K562 (cell line): ENCODE measurements at regions of chrX and their contacts with region 1.

Region 1: DNA sequence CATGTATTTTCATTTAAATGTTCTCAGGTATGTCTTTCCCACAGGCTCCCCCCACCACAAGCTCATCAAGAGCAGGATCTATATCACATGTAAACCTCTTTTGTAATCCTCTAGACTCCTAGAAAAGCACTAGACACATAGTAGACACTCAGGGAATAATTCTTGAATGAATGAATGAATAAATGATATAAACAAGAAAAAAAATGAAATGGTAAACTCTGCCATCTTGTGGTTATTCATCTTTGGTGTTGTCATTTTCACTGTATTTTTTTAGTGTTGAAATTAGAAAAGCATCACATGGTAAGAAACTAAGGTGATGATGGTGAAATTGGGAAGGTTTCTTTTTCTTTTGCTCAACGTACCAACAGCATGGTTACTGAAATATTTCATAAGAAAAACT is 34.2 kb upstream of the C1GALT1C1 start:
- DNase-seq: peak in 1 of 4 experiments; percentile 16
- ATAC-seq: no peak
- H3K4me3 ChIP-seq: no peak overlapping the region
- H3K27ac ChIP-seq: no peak overlapping the region
- H3K4me1 ChIP-seq: no peaks in the 10 kb centered on the region
- H3K27me3 ChIP-seq: no peaks in the 10 kb centered on the region
- CTCF ChIP-seq: peak in 2 of 3 experiments; percentile 24 to 67; a peak in 3 of 6 replicates
- EP300 ChIP-seq: no peak
- POLR2A ChIP-seq: no peak
- RAD21 ChIP-seq: peak; percentile 50 to 78

Region 2: DNA sequence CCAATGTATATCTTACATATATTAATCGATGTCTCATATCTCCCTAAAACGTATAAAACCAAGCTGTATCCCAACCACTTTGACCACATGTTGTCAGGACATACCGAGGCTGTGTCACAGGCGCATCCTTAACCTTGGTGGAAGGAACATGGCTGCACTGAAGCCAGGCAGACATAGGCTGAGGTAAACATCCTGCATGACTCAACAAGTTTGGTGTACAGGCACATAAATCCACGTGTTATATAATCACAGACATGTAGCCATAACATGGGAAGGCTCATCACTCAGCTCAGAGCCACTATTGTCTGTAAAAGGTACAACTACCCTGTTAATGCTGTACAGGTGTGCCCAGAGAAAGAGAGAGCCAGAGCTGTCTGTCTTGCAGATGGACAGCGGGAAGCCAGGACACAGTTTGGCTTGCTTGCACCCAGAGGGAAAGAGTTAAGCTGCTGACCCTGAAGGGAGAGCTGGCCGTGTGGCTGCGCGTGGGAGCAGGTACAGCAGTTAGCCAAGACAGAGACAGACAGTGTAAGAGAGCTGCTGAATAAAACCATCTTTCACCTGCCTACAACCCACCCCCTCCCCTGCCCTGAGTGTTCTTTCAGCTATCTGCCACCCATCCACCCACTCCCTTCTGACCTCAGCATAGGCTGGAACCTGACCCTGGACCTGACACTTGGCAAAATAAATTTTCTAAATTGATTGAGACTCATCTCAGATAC is 435.7 kb before region 1 on chrX:
- CTCF ChIA-PET with region 1: no interaction called
- POLR2A ChIA-PET with region 1: no interaction called
- in situ Hi-C with region 1: no loop called
- intact Hi-C with region 1: no loop called
- DNase-seq: peak in 1 of 4 experiments; percentile 11
- ATAC-seq: peak; percentile 78
- H3K4me3 ChIP-seq: no peak overlapping the region
- H3K27ac ChIP-seq: 0 out of 3 replicates have a peak overlapping the region, but pooled peaks have one; percentile 25
- H3K4me1 ChIP-seq: peaks cover 8 to 10% of the 10 kb centered on the region in 2 experiments; a peak in 4 of 5 replicates
- H3K27me3 ChIP-seq: no peaks in the 10 kb centered on the region
- CTCF ChIP-seq: no peak
- EP300 ChIP-seq: no peak
- POLR2A ChIP-seq: no peak
- RAD21 ChIP-seq: no peak

Region 3: DNA sequence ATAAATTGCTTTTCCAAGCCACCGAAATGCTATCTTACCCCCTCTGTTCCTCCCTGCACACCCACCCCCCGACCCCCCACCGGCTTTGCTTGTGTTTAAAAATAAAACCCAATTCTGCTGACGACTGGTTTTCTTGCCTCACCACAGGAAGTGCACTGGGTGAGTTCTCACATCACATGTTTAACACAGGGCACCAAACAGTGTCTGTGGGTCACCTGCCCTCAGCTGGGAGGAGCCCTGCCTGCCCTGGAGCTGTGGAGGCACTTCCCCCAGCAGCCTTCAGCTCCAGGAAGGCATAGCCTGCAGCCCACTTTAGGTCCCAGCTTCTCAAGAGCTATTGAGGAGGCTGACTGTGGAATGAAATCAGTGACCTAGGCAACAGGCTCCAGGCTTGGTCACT is 361.6 kb before region 1 on chrX:
- CTCF ChIA-PET with region 1: no interaction called
- POLR2A ChIA-PET with region 1: no interaction called
- in situ Hi-C with region 1: no loop called
- intact Hi-C with region 1: no loop called
- DNase-seq: no peak
- ATAC-seq: no peak
- H3K4me3 ChIP-seq: no peak overlapping the region
- H3K27ac ChIP-seq: no peak overlapping the region
- H3K4me1 ChIP-seq: peaks cover 0 to 11% of the 10 kb centered on the region in 2 experiments; a peak in 3 of 5 replicates
- H3K27me3 ChIP-seq: no peaks in the 10 kb centered on the region
- CTCF ChIP-seq: no peak
- EP300 ChIP-seq: no peak
- POLR2A ChIP-seq: no peak
- RAD21 ChIP-seq: no peak

Region 4: DNA sequence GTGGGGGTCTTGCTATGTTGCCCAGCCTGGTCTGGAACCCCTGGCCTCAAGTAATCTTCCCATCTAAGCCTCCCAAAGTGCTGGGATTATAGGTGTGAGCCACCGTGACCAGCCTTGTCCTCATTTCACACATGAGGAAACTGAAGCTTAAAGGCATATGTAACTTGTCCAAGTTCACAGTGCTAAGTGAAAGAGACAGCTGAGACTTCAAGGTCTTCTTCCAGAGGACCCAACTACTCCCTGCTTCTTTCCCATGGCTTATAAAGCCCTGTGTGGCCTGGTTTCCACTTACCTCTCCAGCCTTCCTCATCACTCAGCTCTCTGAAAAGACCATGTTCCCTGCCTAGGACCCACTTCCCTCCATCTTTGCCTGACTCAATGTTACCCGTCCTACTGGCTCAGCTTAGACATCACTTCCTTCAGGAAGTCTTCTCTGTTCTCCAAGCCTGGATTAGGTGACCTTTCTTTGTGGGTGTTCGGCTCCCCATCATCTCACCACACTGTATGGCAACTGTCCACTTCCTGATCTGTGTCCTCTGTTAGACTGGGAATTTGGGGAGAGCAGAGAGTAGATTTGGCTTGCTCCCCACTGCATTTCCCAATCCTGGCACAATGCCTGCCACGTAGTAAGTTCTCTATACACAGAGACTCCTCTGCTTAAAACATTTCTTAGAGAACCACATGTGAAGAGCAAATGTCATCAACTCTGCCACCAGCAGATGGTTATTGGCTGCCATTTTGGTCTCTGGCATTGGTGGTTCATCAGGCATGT is 164.6 kb before region 1 on chrX:
- CTCF ChIA-PET with region 1: interaction called, 18 read pairs
- POLR2A ChIA-PET with region 1: no interaction called
- in situ Hi-C with region 1: no loop called
- intact Hi-C with region 1: loop called (anchors 1 kb)
- DNase-seq: no peak
- ATAC-seq: no peak
- H3K4me3 ChIP-seq: no peak overlapping the region
- H3K27ac ChIP-seq: no peak overlapping the region
- H3K4me1 ChIP-seq: no peaks in the 10 kb centered on the region; a peak in 1 of 5 replicates
- H3K27me3 ChIP-seq: no peaks in the 10 kb centered on the region
- CTCF ChIP-seq: no peak
- EP300 ChIP-seq: no peak
- POLR2A ChIP-seq: no peak
- RAD21 ChIP-seq: no peak

Region 5: GRCh38 chrX:120514236-120514635 is 149.8 kb before region 1 on chrX:
- CTCF ChIA-PET with region 1: interaction called, 11 read pairs
- POLR2A ChIA-PET with region 1: interaction called, 3 read pairs
- in situ Hi-C with region 1: loop called (anchors 5 kb)
- intact Hi-C with region 1: loop called (anchors 1 kb)
- DNase-seq: peak in 3 of 4 experiments; percentile 5 to 41 (median 23)
- ATAC-seq: peak; percentile 89
- H3K4me3 ChIP-seq: no peak overlapping the region
- H3K27ac ChIP-seq: no peak overlapping the region
- H3K4me1 ChIP-seq: no peaks in the 10 kb centered on the region; a peak in 1 of 5 replicates
- H3K27me3 ChIP-seq: no peaks in the 10 kb centered on the region
- CTCF ChIP-seq: peak; percentile 49 to 64 (median 50); a peak in 4 of 6 replicates
- EP300 ChIP-seq: no peak
- POLR2A ChIP-seq: no peak
- RAD21 ChIP-seq: peak; percentile 25 to 61